ENCODE measurements at regions of chr9 and their contacts with region 1.

Region 1: GRCh38 chr9:128034821-128035764 is 32.0 kb downstream of the NAIF1 start:
- DNase-seq: no peak
- H3K4me3 ChIP-seq: no peak overlapping the region
- CTCF ChIP-seq: peak; percentile 66

Region 2: DNA sequence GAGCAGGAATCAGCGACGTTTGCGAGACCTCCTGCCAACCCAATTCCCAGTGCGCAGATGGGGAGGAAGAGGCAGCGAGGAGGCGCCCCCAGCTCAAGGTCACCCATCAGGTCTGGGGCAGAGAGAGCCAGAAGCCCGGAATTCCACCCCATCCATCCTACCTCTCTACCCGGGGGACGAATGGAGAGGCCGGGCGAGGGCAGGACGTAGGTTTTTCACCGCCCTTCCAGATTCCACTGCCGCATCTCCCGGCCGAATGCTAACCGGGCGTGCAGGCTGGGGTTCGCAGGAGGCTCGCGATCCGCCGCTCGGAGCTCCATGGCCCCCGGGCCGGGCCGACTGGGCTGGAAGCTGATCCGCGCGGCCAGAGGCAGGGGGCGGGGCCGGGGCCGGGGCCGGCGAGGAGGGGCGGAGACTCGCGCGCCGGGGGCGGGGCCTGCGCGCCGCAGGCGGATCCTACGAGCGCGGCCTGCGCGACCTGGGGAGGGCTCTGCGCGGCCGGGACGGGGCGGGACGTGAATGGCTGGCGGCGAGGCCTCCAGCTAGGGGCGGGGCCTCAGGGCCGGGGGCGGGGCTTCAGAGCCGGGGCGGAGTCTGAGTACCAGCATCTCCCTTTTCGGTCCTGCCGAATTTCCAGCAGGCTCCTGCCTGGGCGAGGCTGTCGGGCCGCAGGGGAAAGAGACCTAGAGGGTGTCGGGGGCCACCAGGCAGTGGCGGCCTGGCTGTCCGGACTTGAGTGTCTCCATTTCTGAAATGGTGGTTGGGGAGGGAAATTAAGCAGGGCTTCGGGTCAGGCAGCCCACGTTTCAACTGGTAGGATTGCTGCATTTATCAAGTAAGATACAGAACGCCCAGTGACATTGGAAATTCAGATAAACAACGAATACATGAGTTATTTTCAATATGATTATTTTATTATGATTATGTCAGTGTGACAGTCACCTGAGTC is 118.2 kb before region 1 on chr9 and contains the start of gene ST6GALNAC4:
- CTCF ChIA-PET with region 1: interaction called, 23 read pairs
- POLR2A ChIA-PET with region 1: no interaction called
- DNase-seq: no peak
- H3K4me3 ChIP-seq: peak within 1 kb of the TSS; percentile 74
- CTCF ChIP-seq: no peak

Region 3: DNA sequence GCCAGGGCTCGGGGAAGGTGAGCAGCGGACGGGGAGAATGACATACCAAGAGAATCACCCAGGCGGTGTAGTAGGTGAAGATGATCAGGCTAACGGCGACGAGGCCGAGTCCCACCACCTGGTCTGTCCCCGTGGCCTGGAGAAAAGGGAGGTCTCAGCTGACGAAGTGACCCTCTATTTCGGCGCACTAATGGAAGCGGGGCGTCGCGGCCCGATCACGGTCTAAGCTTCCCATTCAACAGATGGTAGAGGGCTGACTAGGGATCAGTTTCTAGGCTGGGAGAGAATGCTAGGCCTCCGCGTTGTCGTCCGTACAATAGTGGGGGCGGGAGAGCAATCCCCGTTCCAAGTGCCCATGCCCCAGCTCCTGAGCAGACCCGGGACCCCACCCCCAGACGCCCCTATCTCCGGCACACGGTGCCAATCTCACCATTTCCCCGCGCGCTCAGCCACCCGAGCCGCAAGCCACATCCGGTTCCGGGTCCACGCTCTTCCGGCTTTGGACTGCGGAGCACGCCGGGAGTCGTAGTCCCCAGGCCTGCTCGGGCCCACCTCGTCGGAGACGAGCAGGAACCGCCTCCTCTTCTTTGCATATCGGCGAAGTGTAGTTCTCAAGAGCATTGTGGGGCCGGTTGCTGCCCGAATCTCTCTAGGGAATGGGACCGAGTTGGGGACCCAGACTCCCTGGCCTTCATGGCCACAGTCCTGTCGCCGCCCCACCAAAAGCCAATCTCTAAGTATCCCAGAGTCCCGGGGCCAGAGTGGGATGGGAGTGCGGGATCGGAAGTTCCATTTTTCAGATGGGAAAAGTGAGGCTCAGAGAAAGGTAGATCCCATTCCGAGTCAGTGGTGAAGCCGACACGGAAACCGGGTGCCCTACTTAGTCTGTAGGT is 97.5 kb before region 1 on chr9 and contains the start of gene DPM2:
- CTCF ChIA-PET with region 1: interaction called, 173 read pairs
- POLR2A ChIA-PET with region 1: no interaction called
- DNase-seq: no peak
- H3K4me3 ChIP-seq: peak within 1 kb of the TSS; percentile 68
- CTCF ChIP-seq: no peak

Region 4: DNA sequence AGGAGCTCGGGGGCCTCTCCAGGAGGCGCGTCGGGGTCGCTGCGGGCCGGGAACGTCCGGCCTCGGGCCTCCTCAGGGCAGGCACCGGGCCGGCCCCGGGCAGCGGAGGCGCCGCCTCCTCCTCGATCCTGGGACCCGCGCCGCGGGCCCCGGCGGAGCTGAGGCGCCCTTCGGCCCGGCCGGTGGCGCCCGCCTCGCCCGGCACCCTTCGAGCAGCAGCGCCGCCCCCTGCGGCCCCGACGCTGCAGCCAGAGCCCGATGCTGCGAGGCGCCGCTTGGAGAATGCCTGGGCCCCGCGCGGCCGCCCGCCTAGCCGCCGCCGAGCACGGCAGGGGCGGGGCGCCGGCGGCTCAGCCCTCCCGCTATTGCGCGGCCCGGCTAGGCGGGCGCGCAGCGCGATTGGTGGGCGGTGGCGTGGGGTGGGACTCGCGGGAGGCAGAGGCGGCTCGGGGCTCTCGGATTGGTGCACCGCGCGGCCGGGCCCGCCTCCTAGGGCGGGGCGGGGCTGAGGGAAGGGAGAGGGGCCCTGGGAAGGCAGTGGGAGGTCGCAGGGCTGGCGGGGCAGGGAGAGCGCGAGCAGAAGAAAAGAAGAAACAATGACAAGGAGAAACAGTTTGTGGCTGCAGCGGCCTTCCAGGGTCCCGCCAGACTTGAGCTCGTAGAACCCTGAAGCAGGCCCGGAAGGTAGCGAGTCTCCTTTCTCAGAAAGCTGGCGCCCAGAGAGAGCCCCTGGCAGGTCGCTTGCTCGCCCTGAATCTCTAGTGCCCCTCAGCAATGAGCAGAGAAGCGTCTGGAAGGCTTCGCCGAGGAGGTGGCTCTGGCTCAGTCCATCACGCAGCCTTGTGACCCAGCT is 54.2 kb before region 1 on chr9 and contains the start of gene EEIG1:
- CTCF ChIA-PET with region 1: interaction called, 14 read pairs
- POLR2A ChIA-PET with region 1: interaction called, 3 read pairs
- DNase-seq: peak; percentile 19
- H3K4me3 ChIP-seq: peak within 1 kb of the TSS; percentile 76
- CTCF ChIP-seq: no peak

Region 5: GRCh38 chr9:128051932-128052709 is 17.0 kb after region 1 on chr9:
- CTCF ChIA-PET with region 1: interaction called, 47 read pairs
- POLR2A ChIA-PET with region 1: no interaction called
- DNase-seq: no peak
- H3K4me3 ChIP-seq: no peak overlapping the region
- CTCF ChIP-seq: no peak

Region 6: GRCh38 chr9:128361986-128362646 is 327.0 kb after region 1 on chr9:
- CTCF ChIA-PET with region 1: no interaction called
- POLR2A ChIA-PET with region 1: no interaction called
- DNase-seq: peak; percentile 36
- H3K4me3 ChIP-seq: peak overlapping the region; percentile 58
- CTCF ChIP-seq: peak; percentile 90

Measured in AG04449 (cell line).